MCF 10A (cell line): ENCODE measurements at regions of chr3 and their contacts with region 1.

Region 1: DNA sequence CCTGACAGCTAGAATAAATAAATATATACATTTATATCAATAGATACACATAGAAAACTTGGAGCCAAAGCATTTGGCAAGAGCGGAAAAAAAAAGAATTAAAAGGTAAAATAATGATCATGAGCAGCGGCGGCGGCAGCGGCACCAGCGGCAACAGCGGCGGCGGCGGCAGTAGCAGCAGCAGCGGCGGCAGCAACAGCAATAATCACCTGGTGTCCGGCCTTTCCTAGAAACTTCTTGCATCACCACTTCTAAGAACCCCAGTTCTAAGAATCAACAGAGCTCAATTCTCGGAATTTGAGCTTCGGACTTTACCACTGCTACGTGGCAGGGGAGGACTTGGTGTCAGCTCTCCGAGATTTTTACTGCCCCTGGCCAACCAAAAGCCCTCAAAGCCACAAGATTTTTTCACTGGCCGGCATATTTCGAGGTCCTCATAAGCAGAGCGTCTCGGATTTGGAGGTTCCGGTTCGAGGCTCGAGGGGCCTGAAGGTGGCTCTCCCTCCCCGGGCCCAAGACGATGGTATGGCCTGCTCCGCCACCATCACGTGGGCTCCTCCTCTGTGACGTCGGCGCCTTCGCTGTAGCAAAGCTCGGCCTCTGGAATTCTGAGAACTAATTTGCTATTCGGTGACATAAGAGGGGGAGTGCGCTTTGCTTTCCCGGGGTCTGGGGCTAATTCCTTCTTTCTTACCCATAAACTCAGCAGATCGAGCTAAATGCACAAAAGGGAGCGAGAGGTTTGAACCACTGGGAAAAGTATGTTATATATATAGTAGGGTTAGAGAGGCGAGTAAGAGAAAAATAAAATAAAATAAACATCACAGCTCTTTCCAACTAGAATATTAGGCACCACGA is at the start of gene BCL6:
- DNase-seq: peak; percentile 98
- H3K4me3 Mint-ChIP-seq: peak within 1 kb of the TSS; percentile 98
- H3K27ac Mint-ChIP-seq: peak within 1 kb of the TSS; percentile 100
- H3K4me1 Mint-ChIP-seq: peaks cover 15% of the 10 kb centered on the region
- H3K27me3 Mint-ChIP-seq: no peaks in the 10 kb centered on the region
- CTCF ChIP-seq: no peak
- total RNA-seq, gene BCL6: 16.4 and 20.9 TPM in 2 replicates

Region 2: DNA sequence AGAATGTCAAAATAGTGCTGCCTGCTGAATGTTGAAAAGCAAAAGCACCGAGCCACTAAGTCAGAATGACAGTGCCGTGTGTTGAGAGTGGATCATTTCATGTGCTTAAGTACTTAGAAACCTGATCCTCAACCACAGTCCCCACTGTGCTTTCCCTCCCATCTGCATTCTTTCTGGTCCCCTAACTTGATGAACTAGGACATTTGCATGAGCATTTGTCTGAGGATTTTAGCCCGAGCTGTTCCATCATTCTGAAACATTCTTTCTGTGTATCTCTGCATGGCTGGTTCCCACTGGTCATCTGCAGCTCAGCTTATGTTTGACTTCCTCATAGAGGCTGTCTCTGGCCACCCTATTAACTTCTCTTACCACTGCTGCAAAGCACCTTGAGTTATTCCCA is 117.3 kb before region 1 on chr3:
- CTCF ChIA-PET with region 1: no interaction called
- POLR2A ChIA-PET with region 1: no interaction called
- intact Hi-C with region 1: no loop called
- DNase-seq: no peak
- H3K4me3 Mint-ChIP-seq: no peak overlapping the region
- H3K27ac Mint-ChIP-seq: no peak overlapping the region
- H3K4me1 Mint-ChIP-seq: peaks cover 32% of the 10 kb centered on the region
- H3K27me3 Mint-ChIP-seq: peaks cover 12% of the 10 kb centered on the region
- CTCF ChIP-seq: no peak

Region 3: GRCh38 chr3:187661267-187661666 is 84.2 kb before region 1 on chr3:
- CTCF ChIA-PET with region 1: no interaction called
- POLR2A ChIA-PET with region 1: no interaction called
- intact Hi-C with region 1: no loop called
- DNase-seq: peak; percentile 47
- H3K4me3 Mint-ChIP-seq: no peak overlapping the region
- H3K27ac Mint-ChIP-seq: no peak overlapping the region
- H3K4me1 Mint-ChIP-seq: no peaks in the 10 kb centered on the region
- H3K27me3 Mint-ChIP-seq: peaks cover 36% of the 10 kb centered on the region
- CTCF ChIP-seq: no peak

Region 4: DNA sequence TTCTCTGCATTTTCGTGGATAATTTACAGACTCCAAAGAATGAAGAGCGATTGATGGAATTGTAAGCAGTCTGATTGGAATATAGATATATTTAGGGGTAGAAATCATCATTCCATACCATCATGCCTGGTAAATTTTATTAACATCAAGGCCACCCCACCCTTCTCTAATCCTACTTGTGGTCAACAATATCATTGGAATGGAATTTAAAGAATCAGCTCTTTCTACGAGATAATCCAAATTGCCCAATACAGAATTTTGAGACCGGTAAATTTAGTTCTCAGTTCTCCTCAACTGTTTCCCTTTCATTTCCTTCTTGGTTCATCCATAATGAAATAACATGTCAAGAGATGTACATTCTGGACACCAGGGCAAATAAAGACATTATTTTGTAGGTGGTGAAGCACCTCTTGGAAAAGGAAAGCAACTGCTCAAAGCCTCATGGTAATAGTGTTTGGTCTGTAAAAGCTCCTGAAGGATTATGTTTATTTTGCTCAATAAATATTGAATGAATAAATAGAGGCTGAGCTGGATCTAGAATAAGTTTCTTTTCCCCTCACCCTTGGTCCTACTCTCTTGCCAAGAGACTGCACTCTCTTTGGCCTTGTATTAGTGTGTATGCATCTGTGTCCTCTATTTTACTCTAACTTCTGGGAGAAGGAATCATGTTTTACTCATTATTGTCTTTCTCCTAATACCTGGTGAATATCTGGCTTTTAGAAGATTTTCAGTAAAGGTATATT is 133.5 kb after region 1 on chr3:
- CTCF ChIA-PET with region 1: no interaction called
- POLR2A ChIA-PET with region 1: interaction called, 17 read pairs
- intact Hi-C with region 1: no loop called
- DNase-seq: peak; percentile 28
- H3K4me3 Mint-ChIP-seq: peak overlapping the region; percentile 49
- H3K27ac Mint-ChIP-seq: peak overlapping the region; percentile 29
- H3K4me1 Mint-ChIP-seq: peaks cover 23% of the 10 kb centered on the region
- H3K27me3 Mint-ChIP-seq: no peaks in the 10 kb centered on the region
- CTCF ChIP-seq: no peak

Region 5: DNA sequence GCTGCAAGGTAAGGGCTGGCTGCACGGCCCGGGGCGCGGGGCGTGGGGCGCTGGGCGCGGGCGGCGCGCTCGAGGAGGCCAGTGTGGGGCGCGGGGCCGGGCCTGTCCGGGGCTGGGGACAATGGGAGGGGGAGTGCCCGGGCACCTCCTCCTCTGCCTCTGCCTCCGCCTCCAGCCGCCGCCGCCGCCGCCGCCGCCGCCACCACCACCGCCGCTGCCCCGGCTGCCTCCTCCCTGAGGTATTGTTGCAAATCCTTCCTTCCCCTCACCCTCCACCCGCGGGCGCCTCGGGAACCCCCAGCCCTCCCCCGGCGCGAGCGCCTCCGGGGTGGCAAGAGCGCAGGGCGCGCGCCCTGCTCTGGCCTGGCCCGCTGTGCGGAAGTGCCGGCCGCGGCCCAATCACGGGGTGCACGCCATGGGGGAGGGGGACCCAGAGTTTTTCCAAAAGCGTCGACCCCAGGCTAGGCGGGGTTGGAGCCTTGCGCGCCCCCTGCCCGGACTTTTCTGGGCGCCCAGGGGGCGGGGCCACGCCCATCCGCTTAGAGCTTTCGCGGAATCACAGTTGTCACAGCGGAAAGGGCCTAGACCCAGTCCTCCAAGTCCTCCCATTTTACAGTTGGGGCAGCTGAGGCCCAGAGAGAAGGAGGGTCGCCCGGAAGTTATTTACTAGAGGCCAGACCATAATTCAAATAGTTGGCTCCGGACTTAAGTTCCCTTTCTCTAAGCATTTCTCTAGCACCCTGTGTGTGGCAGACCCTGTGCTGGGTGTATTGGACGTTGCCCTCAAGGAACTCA is 408.8 kb after region 1 on chr3 and contains the start of gene LPP:
- CTCF ChIA-PET with region 1: interaction called, 12 read pairs
- POLR2A ChIA-PET with region 1: interaction called, 64 read pairs
- intact Hi-C with region 1: loop called (anchors 1 kb)
- DNase-seq: peak; percentile 67
- H3K4me3 Mint-ChIP-seq: peak within 1 kb of the TSS; percentile 90
- H3K27ac Mint-ChIP-seq: peak within 1 kb of the TSS; percentile 96
- H3K4me1 Mint-ChIP-seq: peaks cover 42% of the 10 kb centered on the region
- H3K27me3 Mint-ChIP-seq: no peaks in the 10 kb centered on the region
- CTCF ChIP-seq: no peak
- total RNA-seq, gene LPP: 107 and 117 TPM in 2 replicates

Region 6: DNA sequence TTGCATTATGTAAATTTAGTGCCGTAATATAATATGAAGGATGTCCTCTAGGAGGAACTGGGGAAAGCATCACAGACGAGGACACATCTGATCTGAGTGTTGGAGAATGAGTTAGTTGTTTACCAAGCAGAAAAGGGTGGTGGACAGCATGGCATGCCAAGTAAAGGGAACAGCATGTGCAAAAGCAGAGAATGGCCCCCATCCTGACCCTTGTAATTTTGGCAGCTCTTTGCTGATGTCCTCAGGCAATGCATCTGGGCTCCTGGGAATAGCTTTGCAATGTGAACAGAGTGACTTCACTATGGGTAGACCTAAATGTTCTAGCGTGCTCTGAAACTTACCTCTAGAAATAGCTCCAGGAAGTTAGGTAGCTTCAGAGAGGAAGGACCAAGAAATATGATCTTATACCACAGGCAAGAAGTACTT is 671.9 kb after region 1 on chr3:
- CTCF ChIA-PET with region 1: interaction called, 4 read pairs
- POLR2A ChIA-PET with region 1: interaction called, 12 read pairs
- intact Hi-C with region 1: no loop called
- DNase-seq: peak; percentile 88
- H3K4me3 Mint-ChIP-seq: no peak overlapping the region
- H3K27ac Mint-ChIP-seq: peak overlapping the region; percentile 66
- H3K4me1 Mint-ChIP-seq: peaks cover 24% of the 10 kb centered on the region
- H3K27me3 Mint-ChIP-seq: no peaks in the 10 kb centered on the region
- CTCF ChIP-seq: no peak

Region 7: GRCh38 chr3:188749010-188749617 is 1003.7 kb after region 1 on chr3:
- CTCF ChIA-PET with region 1: no interaction called
- POLR2A ChIA-PET with region 1: interaction called, 3 read pairs
- intact Hi-C with region 1: loop called (anchors 5 kb)
- DNase-seq: peak; percentile 71
- H3K4me3 Mint-ChIP-seq: no peak overlapping the region
- H3K27ac Mint-ChIP-seq: no peak overlapping the region
- H3K4me1 Mint-ChIP-seq: no peaks in the 10 kb centered on the region
- H3K27me3 Mint-ChIP-seq: no peaks in the 10 kb centered on the region
- CTCF ChIP-seq: peak; percentile 69

Region 8: DNA sequence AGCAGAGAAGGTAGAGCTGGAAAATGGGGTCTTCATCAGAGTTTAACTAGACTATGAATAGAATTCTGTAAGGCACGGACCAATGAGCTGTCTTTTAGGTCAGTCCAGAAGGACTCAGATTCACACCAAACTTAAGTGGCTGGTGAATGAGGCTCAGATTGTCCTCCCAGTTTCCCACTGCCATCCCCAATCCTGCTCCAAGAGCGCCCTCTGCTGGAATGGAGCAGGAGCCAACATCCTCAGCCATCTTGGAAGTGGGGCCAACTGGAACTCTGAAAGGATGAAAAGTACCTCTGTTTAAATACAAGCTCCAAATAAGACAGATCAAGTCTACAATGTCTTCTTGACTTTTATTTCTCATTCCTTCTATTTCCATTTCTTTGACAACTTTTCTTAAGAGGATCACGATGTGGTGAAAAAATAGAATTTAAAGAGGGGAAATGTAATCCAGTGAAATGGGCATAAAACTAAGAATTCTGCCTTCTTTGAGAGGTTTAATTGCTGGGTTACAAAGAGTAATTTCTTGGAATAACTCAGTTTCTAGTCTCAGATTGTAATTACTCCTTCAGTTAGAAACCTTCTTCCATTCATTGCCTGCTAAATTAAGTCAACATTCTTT is 1209.3 kb after region 1 on chr3:
- CTCF ChIA-PET with region 1: interaction called, 240 read pairs
- POLR2A ChIA-PET with region 1: interaction called, 252 read pairs
- intact Hi-C with region 1: loop called (anchors 1 kb)
- DNase-seq: peak; percentile 94
- H3K4me3 Mint-ChIP-seq: no peak overlapping the region
- H3K27ac Mint-ChIP-seq: no peak overlapping the region
- H3K4me1 Mint-ChIP-seq: peaks cover 11% of the 10 kb centered on the region
- H3K27me3 Mint-ChIP-seq: no peaks in the 10 kb centered on the region
- CTCF ChIP-seq: peak; percentile 92